BJ (cell line): ENCODE measurements at regions of chr15 and their contacts with region 1.

Region 1: GRCh38 chr15:57611938-57612337 is 20.2 kb downstream of the MYZAP start:
- DNase-seq: no peak
- H3K4me3 ChIP-seq: no peak overlapping the region
- H3K27me3 ChIP-seq: no peaks in the 10 kb centered on the region
- CTCF ChIP-seq: peak; percentile 58

Region 2: DNA sequence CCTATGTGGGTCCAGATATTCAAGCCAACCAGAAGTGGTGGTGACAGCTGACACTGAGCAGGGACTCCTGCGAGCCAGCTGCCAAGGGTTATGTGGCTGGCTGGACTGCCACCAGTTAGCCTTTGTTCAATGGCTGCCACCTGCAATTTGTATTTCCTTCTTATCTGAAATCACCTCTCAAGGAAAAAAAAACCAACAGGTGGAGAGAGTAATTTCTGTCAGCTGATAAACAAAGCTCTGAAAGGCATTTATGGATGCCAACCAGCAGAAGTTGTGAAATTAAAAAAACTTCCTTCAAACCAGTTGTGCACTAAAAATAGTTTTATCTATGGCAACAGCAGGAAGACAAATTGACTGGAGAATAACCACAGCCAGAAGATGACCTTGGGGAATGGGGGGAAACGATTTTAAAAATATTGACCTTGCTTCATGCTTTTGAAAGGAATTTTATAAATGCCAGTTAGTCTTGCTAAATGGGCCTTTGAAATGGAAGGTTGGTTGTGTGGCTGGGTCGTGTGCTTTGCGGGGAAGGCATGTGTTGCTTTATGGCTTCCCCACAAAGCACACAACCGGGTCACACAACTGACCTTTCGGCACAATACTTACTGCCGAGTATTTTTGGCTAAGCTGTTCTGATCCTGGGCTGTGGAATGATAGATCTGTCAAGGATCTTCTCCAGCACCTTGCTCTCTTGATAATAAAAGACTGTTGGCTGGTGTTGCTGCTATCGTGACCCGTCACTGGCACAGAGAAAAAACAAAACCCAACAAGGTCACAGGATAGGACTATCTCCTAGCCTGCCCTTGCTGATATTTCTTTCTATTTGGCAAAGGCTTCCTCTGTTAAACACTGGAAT is 16.7 kb before region 1 on chr15:
- CTCF ChIA-PET with region 1: interaction called, 7 read pairs
- POLR2A ChIA-PET with region 1: interaction called, 10 read pairs
- DNase-seq: no peak
- H3K4me3 ChIP-seq: no peak overlapping the region
- H3K27me3 ChIP-seq: 0 out of 2 replicates have a peak, but pooled peaks cover 4% of the 10 kb centered on the region
- CTCF ChIP-seq: no peak